WTC11 (cell line): ENCODE measurements at regions of chr11 and their contacts with region 1.

Region 1: GRCh38 chr11:120929664-120930154 is 94.2 kb upstream of the TBCEL start:
- DNase-seq: peak; percentile 84
- ATAC-seq: peak; percentile 88
- H3K4me3 Mint-ChIP-seq: no peak overlapping the region
- H3K27ac Mint-ChIP-seq: no peak overlapping the region
- H3K4me1 Mint-ChIP-seq: peaks cover 21% of the 10 kb centered on the region
- H3K27me3 Mint-ChIP-seq: no peaks in the 10 kb centered on the region
- CTCF ChIP-seq: peak; percentile 83

Region 2: DNA sequence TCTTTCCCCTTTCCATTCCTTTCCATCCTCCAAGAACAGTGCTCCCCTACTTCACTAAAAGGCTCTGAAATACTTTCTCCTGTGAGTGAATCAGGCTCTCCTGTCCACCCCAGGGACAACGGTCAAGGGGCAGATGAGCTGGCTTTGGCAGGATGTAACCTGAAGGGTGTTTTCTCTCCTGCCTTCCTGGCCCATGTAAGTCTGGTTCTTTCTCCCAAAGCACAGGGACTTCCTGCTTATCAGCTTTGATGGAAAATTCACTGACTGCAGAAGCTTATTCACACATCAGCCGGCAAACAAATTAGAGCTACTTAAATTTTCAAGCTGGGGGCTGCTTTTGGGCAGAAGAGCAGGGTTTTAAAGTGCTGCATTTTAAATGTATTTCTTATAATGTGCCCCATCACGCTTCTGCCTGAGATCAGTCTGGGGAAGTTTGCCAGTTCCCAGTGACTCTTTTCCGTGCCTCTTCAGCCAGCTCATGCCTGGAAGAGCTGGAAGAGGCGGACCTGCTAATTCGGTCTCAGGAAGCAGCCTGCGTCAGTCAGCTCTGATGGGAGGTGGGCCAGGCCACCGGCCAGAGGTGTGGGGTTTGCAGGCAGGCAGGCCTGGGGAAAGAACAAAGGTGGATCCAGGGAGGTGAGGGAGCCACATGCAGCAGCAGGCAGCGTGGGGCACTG is 46.2 kb before region 1 on chr11:
- CTCF ChIA-PET with region 1: interaction called, 23 read pairs
- POLR2A ChIA-PET with region 1: no interaction called
- DNase-seq: no peak
- ATAC-seq: peak; percentile 50; the same call in 1 of the 2 replicates
- H3K4me3 Mint-ChIP-seq: no peak overlapping the region
- H3K27ac Mint-ChIP-seq: peak overlapping the region; percentile 50; the same call in 1 of the 2 replicates
- H3K4me1 Mint-ChIP-seq: peaks cover 12% of the 10 kb centered on the region; the same call in 1 of the 2 replicates
- H3K27me3 Mint-ChIP-seq: no peaks in the 10 kb centered on the region
- CTCF ChIP-seq: no peak

Region 3: DNA sequence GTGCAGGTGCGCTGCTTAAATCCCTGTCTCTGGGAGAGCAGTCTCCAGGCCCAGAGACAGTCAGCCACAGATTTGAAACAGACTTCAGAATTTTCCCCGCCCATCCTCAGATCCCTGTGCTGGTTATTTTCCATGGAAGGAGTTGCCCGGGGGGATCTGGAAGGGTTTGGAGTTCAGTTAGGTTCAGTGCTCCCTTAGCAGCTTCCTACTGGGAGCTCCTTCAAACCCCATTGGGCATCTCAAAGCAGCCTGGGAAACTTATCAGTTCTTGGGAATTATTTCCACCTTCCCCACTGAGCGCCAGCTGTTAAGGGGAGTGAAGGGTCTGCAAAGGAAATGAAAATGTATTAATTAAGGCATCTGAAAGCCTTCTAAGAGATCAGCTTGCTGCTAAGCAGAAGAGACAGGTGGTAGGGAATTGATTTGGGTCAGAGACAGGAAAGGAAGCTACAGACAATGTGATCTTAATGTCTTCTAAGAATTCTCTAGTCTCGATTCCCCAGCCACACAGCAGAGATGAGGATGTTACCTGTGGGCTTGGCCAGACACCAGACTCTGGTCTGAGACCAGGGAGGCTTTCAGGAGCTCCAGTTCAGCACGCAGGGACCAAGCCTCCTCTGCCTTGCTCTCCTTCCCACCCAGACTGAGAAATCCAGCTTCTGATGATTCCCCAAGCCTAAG is 12.0 kb before region 1 on chr11:
- CTCF ChIA-PET with region 1: interaction called, 41 read pairs
- POLR2A ChIA-PET with region 1: no interaction called
- DNase-seq: no peak
- ATAC-seq: peak; percentile 30; the same call in 1 of the 2 replicates
- H3K4me3 Mint-ChIP-seq: no peak overlapping the region
- H3K27ac Mint-ChIP-seq: no peak overlapping the region
- H3K4me1 Mint-ChIP-seq: peaks cover 21% of the 10 kb centered on the region
- H3K27me3 Mint-ChIP-seq: no peaks in the 10 kb centered on the region
- CTCF ChIP-seq: no peak